Ovary (tissue), 10 donors: ENCODE measurements at regions of chr17 and their contacts with region 1.

Region 1: DNA sequence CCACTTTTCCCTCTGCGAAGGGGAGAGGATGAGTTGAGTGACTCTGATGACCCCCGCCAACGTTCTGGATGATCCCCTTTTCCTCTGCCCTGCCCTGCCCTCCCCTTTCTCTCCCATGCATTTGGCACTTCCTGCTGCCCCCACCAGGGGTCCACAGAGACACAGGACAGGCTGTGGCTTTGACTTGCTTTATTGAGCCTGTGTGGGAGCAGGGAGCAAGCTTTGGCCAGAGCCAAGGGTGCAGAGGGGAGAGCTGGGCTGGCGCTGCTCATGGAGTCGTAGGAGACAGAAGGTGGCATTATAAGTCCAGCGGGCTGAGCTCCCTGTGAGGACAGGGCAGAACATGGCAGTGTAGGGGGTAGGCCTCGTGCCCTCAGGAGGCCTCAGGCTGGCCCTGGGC is 1.6 kb downstream of the PPY start:
- DNase-seq: no peak
- H3K4me3 ChIP-seq: no peak overlapping the region
- H3K27ac ChIP-seq: no peak overlapping the region
- H3K4me1 ChIP-seq: peaks cover 4% of the 10 kb centered on the region
- H3K27me3 ChIP-seq: no peaks in the 10 kb centered on the region
- CTCF ChIP-seq: no peak
- EP300 ChIP-seq: no peak
- POLR2A ChIP-seq: no peak

Region 2: GRCh38 chr17:43994272-43995149 is 53.9 kb after region 1 on chr17:
- intact Hi-C with region 1: loop called in 1 of 4 experiments (anchors 10 kb)
- DNase-seq: peak; percentile 31 to 76 (median 63)
- H3K4me3 ChIP-seq: peak overlapping the region; percentile 34
- H3K27ac ChIP-seq: no peak overlapping the region
- H3K4me1 ChIP-seq: no peaks in the 10 kb centered on the region
- H3K27me3 ChIP-seq: no peaks in the 10 kb centered on the region
- CTCF ChIP-seq: peak in 2 of 3 donors; percentile 64
- EP300 ChIP-seq: no peak
- POLR2A ChIP-seq: no peak

Region 3: DNA sequence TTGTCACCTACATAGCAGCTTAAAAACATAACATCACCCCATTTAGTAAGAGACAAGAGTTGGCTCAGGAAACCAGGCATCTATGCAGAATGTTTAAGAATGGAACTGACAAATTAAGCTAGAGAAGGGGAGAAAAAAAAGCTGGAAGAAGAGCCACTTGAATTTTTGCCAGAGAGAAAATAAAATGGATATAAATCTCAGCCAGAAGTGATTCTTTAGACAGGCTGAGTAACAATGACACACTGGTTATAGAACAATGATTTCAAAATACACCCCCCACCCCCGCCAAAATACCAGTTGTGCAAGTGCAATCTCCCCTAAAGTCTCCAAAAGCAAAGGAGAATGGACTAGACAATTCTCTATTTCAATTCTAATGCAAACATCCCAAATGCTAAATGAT is 103.4 kb after region 1 on chr17:
- intact Hi-C with region 1: loop called in 2 of 4 experiments (anchors 10 kb)
- DNase-seq: no peak
- H3K4me3 ChIP-seq: no peak overlapping the region
- H3K27ac ChIP-seq: no peak overlapping the region
- H3K4me1 ChIP-seq: no peaks in the 10 kb centered on the region
- H3K27me3 ChIP-seq: no peaks in the 10 kb centered on the region
- CTCF ChIP-seq: no peak
- EP300 ChIP-seq: no peak
- POLR2A ChIP-seq: no peak

Region 4: GRCh38 chr17:44159519-44160210 is 219.0 kb after region 1 on chr17:
- intact Hi-C with region 1: loop called in 1 of 4 experiments (anchors 10 kb)
- DNase-seq: no peak
- H3K4me3 ChIP-seq: no peak overlapping the region
- H3K27ac ChIP-seq: no peak overlapping the region
- H3K4me1 ChIP-seq: no peaks in the 10 kb centered on the region
- H3K27me3 ChIP-seq: no peaks in the 10 kb centered on the region
- CTCF ChIP-seq: no peak
- EP300 ChIP-seq: no peak
- POLR2A ChIP-seq: no peak

Region 5: GRCh38 chr17:44167181-44167861 is 226.7 kb after region 1 on chr17:
- intact Hi-C with region 1: loop called in 2 of 4 experiments (anchors 5 to 10 kb)
- DNase-seq: no peak
- H3K4me3 ChIP-seq: no peak overlapping the region
- H3K27ac ChIP-seq: no peak overlapping the region
- H3K4me1 ChIP-seq: peaks cover 6% of the 10 kb centered on the region
- H3K27me3 ChIP-seq: no peaks in the 10 kb centered on the region
- CTCF ChIP-seq: no peak
- EP300 ChIP-seq: no peak
- POLR2A ChIP-seq: no peak